Caco-2 (cell line): ENCODE measurements at regions of chr15 and their contacts with region 1.

Region 1: GRCh38 chr15:37045859-37046740 is 54.2 kb downstream of the MEIS2 start:
- DNase-seq: peak; percentile 44 to 48
- H3K4me3 ChIP-seq: no peak overlapping the region
- H3K4me3 Mint-ChIP-seq: peak overlapping the region; percentile 69
- H3K27ac Mint-ChIP-seq: peak overlapping the region; percentile 36
- H3K4me1 ChIP-seq: peaks cover 29% of the 10 kb centered on the region
- H3K4me1 Mint-ChIP-seq: peaks cover 30% of the 10 kb centered on the region
- H3K27me3 ChIP-seq: no peaks in the 10 kb centered on the region
- H3K27me3 Mint-ChIP-seq: no peaks in the 10 kb centered on the region
- CTCF ChIP-seq: no peak

Region 2: DNA sequence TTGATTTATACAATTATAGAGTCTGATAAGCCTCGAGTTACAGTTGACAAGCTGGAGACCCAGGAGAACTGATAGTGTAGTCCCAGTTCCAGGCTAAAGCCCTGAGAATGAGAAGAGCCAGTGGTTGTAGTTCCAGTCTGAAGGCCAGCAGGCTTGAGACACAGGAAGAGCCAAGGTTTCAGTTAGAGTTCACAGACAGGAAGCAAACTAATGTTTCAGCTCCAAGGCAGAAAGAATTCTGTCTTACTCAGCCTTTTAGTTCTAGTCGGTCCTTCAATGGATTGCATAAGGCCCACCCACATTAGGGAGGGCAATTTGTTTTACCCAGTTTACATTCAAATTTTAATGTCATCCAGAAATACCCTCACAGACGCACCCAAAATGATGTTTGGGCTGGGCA is 364.0 kb before region 1 on chr15:
- CTCF ChIA-PET with region 1: no interaction called
- POLR2A ChIA-PET with region 1: no interaction called
- intact Hi-C with region 1: no loop called
- DNase-seq: no peak
- H3K4me3 ChIP-seq: no peak overlapping the region
- H3K4me3 Mint-ChIP-seq: no peak overlapping the region
- H3K27ac Mint-ChIP-seq: no peak overlapping the region
- H3K4me1 ChIP-seq: no peaks in the 10 kb centered on the region
- H3K4me1 Mint-ChIP-seq: no peaks in the 10 kb centered on the region
- H3K27me3 ChIP-seq: no peaks in the 10 kb centered on the region
- H3K27me3 Mint-ChIP-seq: no peaks in the 10 kb centered on the region
- CTCF ChIP-seq: no peak

Region 3: DNA sequence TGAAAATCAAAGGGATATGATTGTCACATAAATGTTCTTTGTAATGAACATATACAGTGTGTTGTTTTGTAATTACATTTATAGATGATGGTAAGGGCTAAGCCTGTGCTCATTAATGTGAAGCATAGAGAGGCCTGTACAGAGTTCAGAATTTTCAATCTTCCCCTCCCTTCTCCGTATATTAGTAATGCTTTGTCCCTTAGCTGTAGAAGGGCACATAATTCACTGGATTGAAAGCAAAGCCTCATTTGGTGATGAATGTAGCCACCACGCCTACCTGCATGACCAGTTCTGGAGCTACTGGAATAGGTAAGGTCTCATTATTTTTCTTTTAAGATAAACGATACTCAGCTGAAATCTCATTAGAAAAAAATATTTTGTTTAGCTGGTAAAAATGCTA is 336.4 kb before region 1 on chr15:
- CTCF ChIA-PET with region 1: no interaction called
- POLR2A ChIA-PET with region 1: no interaction called
- intact Hi-C with region 1: no loop called
- DNase-seq: no peak
- H3K4me3 ChIP-seq: no peak overlapping the region
- H3K4me3 Mint-ChIP-seq: no peak overlapping the region
- H3K27ac Mint-ChIP-seq: no peak overlapping the region
- H3K4me1 ChIP-seq: no peaks in the 10 kb centered on the region
- H3K4me1 Mint-ChIP-seq: no peaks in the 10 kb centered on the region
- H3K27me3 ChIP-seq: no peaks in the 10 kb centered on the region
- H3K27me3 Mint-ChIP-seq: no peaks in the 10 kb centered on the region
- CTCF ChIP-seq: no peak

Region 4: DNA sequence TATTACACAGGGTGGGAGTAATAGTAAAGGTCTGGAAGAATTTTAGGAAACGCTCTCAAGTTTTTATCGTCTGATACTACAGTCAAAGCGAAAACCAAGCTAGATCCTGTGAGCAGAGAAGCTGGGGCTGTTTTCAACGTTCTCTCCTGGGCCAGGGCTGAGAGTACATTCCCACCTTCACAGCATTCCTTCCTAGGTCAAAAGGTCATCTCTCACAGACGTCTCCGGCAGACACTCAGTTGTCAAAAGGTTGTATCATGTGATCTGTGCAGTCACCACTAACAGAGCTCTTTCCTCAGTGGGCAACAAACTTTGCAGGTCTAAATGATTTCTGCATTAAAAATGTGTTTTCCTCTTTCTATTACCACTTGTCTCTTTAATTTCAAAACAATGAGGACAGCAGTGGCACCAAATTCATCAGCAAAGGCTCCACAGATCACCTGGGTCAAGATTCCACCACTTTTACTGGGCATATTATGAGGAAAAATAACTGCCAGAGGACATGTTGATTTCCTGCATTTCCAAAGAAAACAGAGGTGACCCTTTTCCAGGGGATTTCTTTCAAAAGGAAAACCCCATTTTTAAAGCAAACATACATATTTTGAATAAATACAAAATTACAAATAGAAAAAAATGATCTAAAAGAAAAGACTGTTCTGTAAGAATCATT is 12.4 kb after region 1 on chr15:
- CTCF ChIA-PET with region 1: no interaction called
- POLR2A ChIA-PET with region 1: no interaction called
- intact Hi-C with region 1: loop called (anchors 1 kb)
- DNase-seq: peak; percentile 58 to 75
- H3K4me3 ChIP-seq: no peak overlapping the region
- H3K4me3 Mint-ChIP-seq: peak overlapping the region; percentile 34
- H3K27ac Mint-ChIP-seq: peak overlapping the region; percentile 52
- H3K4me1 ChIP-seq: peaks cover 25% of the 10 kb centered on the region
- H3K4me1 Mint-ChIP-seq: peaks cover 11% of the 10 kb centered on the region
- H3K27me3 ChIP-seq: no peaks in the 10 kb centered on the region
- H3K27me3 Mint-ChIP-seq: no peaks in the 10 kb centered on the region
- CTCF ChIP-seq: no peak

Region 5: DNA sequence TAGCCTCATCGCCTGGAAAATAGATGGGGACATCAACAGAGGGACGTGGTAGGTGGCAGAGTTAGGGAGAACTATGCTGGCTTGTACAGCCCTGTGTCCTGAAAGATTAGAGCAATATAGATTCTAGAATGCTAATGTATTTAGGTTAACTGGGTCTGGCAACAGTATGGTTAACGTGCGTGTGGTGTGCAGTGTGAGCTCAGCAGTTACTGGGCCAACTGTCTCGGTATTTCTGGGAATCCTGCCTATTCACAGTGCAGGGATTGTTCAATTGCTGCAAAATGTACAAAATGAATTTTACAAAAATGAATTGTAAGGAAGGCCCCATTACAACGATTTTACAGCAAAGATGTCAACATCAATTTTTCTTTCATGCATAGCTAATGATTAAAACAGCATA is 33.6 kb after region 1 on chr15:
- CTCF ChIA-PET with region 1: no interaction called
- POLR2A ChIA-PET with region 1: no interaction called
- intact Hi-C with region 1: loop called (anchors 2 kb)
- DNase-seq: no peak
- H3K4me3 ChIP-seq: no peak overlapping the region
- H3K4me3 Mint-ChIP-seq: no peak overlapping the region
- H3K27ac Mint-ChIP-seq: no peak overlapping the region
- H3K4me1 ChIP-seq: peaks cover 53% of the 10 kb centered on the region
- H3K4me1 Mint-ChIP-seq: peaks cover 21% of the 10 kb centered on the region
- H3K27me3 ChIP-seq: no peaks in the 10 kb centered on the region
- H3K27me3 Mint-ChIP-seq: no peaks in the 10 kb centered on the region
- CTCF ChIP-seq: no peak

Region 6: GRCh38 chr15:37100109-37100965 is 54.2 kb after region 1 on chr15 and contains the start of gene MEIS2:
- CTCF ChIA-PET with region 1: no interaction called
- POLR2A ChIA-PET with region 1: interaction called, 3 read pairs
- intact Hi-C with region 1: loop called (anchors 2 kb)
- DNase-seq: peak; percentile 92 to 96
- H3K4me3 ChIP-seq: peak within 1 kb of the TSS; percentile 89
- H3K4me3 Mint-ChIP-seq: peak within 1 kb of the TSS; percentile 90
- H3K27ac Mint-ChIP-seq: peak within 1 kb of the TSS; percentile 91
- H3K4me1 ChIP-seq: peaks cover 5% of the 10 kb centered on the region; the same call in 1 of the 2 replicates
- H3K4me1 Mint-ChIP-seq: peaks cover 17% of the 10 kb centered on the region
- H3K27me3 ChIP-seq: no peaks in the 10 kb centered on the region
- H3K27me3 Mint-ChIP-seq: no peaks in the 10 kb centered on the region
- CTCF ChIP-seq: no peak
- total RNA-seq, gene MEIS2: 28.5 and 28.7 TPM in 2 replicates

Region 7: GRCh38 chr15:37253877-37254276 is 207.8 kb after region 1 on chr15:
- CTCF ChIA-PET with region 1: no interaction called
- POLR2A ChIA-PET with region 1: no interaction called
- intact Hi-C with region 1: no loop called
- DNase-seq: no peak
- H3K4me3 ChIP-seq: no peak overlapping the region
- H3K4me3 Mint-ChIP-seq: no peak overlapping the region
- H3K27ac Mint-ChIP-seq: no peak overlapping the region
- H3K4me1 ChIP-seq: peaks cover 5% of the 10 kb centered on the region
- H3K4me1 Mint-ChIP-seq: no peaks in the 10 kb centered on the region
- H3K27me3 ChIP-seq: no peaks in the 10 kb centered on the region
- H3K27me3 Mint-ChIP-seq: peaks cover 3% of the 10 kb centered on the region
- CTCF ChIP-seq: no peak